HepG2 (cell line): ENCODE measurements at regions of chr9 and their contacts with region 1.

Region 1: DNA sequence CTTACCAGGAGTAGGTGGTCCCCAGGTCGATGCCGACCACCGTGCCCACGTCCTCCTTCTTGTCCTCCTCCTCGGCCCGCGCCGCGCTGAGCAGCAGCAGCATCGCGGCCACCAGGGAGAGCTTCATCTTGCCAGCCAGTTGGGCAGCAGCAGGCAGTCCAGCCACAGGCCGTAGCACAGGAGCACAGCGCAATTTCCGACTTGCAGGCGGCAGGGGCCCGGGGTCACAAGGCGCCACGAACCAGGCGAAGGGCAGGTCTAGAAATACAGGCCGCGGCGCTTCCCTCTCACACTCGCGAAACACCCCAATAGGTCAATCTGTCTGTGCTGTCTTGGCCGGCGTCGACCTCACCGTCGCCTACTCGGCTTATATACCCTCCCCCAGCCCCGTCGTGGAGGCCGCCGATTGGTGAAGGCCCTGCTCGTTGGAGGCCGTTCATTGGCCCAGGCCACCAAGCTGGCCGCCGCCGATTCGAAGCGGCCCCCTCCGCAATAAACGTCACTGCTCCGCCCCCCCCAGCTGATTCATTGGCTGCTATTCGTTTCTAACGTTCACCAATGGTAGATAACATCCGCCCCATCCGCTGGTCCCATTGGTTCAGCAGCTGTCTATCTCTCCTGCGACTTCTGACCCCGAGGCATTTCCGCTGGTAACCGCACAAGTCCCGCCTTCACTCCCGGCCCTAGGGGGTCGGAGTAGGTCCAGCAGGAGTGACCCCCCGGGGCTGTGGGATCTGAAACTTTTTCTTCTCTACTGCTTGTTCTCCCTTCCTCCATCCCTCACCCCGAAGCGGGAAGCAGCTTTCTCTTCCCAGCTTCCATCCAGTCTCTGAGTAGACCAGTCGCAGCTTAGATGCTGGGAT is at the start of gene HSPA5:
- DNase-seq: peak; percentile 99
- ATAC-seq: peak; percentile 95
- H3K4me3 ChIP-seq: peak within 1 kb of the TSS; percentile 89 to 98 (median 97)
- H3K27ac ChIP-seq: peak within 1 kb of the TSS; percentile 97
- H3K4me1 ChIP-seq: peaks cover 55% of the 10 kb centered on the region
- H3K27me3 ChIP-seq: no peaks in the 10 kb centered on the region; a peak in 1 of 5 replicates
- CTCF ChIP-seq: peak; percentile 45
- EP300 ChIP-seq: peak in 1 of 2 experiments; percentile 5; a peak in 2 of 4 replicates
- POLR2A ChIP-seq: peak; percentile 98 to 99
- RAD21 ChIP-seq: no peak
- total RNA-seq, gene HSPA5: 170 and 201 TPM in 2 replicates

Region 2: GRCh38 chr9:123312306-123312877 is 1928.8 kb before region 1 on chr9:
- CTCF ChIA-PET with region 1: no interaction called
- POLR2A ChIA-PET with region 1: no interaction called
- in situ Hi-C with region 1: no loop called
- intact Hi-C with region 1: no loop called
- DNase-seq: no peak
- ATAC-seq: peak; percentile 24; the same call in 1 of the 3 replicates
- H3K4me3 ChIP-seq: no peak overlapping the region
- H3K27ac ChIP-seq: no peak overlapping the region
- H3K4me1 ChIP-seq: peaks cover 66% of the 10 kb centered on the region
- H3K27me3 ChIP-seq: no peaks in the 10 kb centered on the region
- CTCF ChIP-seq: no peak
- EP300 ChIP-seq: no peak
- POLR2A ChIP-seq: no peak
- RAD21 ChIP-seq: no peak

Region 3: DNA sequence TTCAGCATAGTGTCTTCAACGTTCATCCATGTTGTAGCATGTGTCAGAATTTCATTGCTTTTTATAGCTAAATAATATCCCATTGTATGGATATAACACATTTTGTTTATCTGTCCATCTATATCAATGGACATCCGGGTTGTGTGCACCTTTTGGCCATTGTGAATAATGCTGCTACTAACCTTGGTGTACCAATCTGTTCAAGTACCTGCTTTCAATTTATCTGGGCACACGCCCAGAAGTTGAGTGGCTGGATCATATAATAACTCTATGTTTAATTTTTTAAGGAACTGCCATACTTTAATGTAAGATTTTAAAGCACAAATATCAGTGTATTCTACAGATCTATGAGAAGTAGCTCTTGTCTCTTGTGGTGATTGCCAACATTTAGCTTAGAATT is 141.4 kb before region 1 on chr9:
- CTCF ChIA-PET with region 1: no interaction called
- POLR2A ChIA-PET with region 1: no interaction called
- in situ Hi-C with region 1: no loop called
- intact Hi-C with region 1: no loop called
- DNase-seq: no peak
- ATAC-seq: no peak
- H3K4me3 ChIP-seq: no peak overlapping the region
- H3K27ac ChIP-seq: no peak overlapping the region
- H3K4me1 ChIP-seq: peaks cover 19% of the 10 kb centered on the region
- H3K27me3 ChIP-seq: no peaks in the 10 kb centered on the region
- CTCF ChIP-seq: no peak
- EP300 ChIP-seq: no peak
- POLR2A ChIP-seq: no peak
- RAD21 ChIP-seq: no peak

Region 4: GRCh38 chr9:125189361-125190289 is 51.6 kb before region 1 on chr9 and contains the start of gene PPP6C:
- CTCF ChIA-PET with region 1: no interaction called
- POLR2A ChIA-PET with region 1: interaction called, 11 read pairs
- in situ Hi-C with region 1: no loop called
- intact Hi-C with region 1: no loop called
- DNase-seq: peak; percentile 91
- ATAC-seq: peak; percentile 97
- H3K4me3 ChIP-seq: peak within 1 kb of the TSS; percentile 91 to 100 (median 98)
- H3K27ac ChIP-seq: peak within 1 kb of the TSS; percentile 90
- H3K4me1 ChIP-seq: peaks cover 50% of the 10 kb centered on the region
- H3K27me3 ChIP-seq: no peaks in the 10 kb centered on the region; a peak in 1 of 5 replicates
- CTCF ChIP-seq: peak; percentile 93
- EP300 ChIP-seq: no peak
- POLR2A ChIP-seq: peak; percentile 50 to 62
- RAD21 ChIP-seq: peak; percentile 31; the same call in 1 of the 2 replicates
- total RNA-seq, gene PPP6C: 20.9 and 32.7 TPM in 2 replicates

Region 5: DNA sequence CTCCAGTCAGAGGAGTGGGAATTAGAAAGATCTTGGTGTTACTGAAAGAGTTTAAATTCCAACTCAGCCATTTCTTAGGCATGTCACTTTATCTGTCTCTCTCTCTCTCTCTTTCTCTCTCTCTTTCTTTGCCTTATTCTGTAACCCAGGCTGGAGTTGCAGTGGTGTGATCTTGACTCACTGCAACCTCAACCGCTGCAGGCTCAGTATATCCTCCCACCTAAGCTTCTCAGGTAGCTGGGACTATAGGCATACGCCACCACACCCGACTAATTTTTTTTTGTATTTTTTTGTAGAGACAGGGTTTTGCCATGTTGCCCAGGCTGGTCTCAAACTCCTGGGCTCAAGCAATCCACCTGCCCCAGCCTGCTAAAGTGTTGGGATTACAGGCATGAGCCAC is 22.6 kb before region 1 on chr9:
- CTCF ChIA-PET with region 1: no interaction called
- POLR2A ChIA-PET with region 1: interaction called, 13 read pairs
- in situ Hi-C with region 1: no loop called
- intact Hi-C with region 1: no loop called
- DNase-seq: no peak
- ATAC-seq: no peak
- H3K4me3 ChIP-seq: no peak overlapping the region
- H3K27ac ChIP-seq: no peak overlapping the region
- H3K4me1 ChIP-seq: no peaks in the 10 kb centered on the region
- H3K27me3 ChIP-seq: no peaks in the 10 kb centered on the region
- CTCF ChIP-seq: no peak
- EP300 ChIP-seq: no peak
- POLR2A ChIP-seq: no peak
- RAD21 ChIP-seq: no peak

Region 6: DNA sequence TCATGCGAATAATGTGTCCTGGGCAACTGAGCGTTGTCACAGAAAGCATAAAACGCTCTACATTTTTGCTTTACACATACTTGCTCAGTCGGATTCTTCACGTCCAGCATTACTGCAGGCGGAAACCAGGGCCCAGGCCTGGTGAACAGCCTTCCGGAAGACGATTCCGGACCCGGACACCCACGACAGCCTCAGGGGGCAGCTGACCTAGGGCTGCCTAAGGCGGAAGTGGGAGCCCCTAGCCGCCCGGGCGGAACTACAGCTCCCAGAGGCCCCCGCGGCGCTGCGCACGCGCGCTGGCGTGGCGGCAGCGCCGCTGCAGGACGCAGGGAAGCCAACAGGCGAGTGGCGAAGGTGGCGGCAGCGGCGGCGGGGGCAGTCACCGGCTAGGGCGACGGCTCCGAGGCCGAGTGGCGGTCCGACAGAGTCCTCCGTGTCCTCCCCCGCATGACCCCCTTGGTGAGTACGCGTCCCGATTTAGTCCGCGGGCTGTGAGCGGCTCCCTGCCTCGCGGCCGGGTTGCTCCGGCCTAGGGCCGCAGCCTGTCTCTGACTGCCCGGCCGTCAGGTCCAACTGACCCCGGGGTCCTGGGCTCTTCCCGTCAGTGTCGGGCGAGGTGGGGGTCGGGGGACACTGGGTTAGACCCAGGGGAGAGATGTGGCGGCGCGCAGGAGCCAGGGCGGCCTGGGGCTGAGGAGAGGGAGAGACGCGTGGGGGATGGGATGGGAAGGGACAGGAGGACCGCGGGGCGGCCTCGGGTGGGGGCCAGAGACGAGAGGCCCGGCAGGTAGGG is 20.5 kb after region 1 on chr9 and contains the start of gene GAPVD1:
- CTCF ChIA-PET with region 1: no interaction called
- POLR2A ChIA-PET with region 1: interaction called, 73 read pairs
- in situ Hi-C with region 1: no loop called
- intact Hi-C with region 1: loop called (anchors 1 kb)
- DNase-seq: peak; percentile 93
- ATAC-seq: peak; percentile 98
- H3K4me3 ChIP-seq: peak within 1 kb of the TSS; percentile 83 to 99 (median 87)
- H3K27ac ChIP-seq: peak within 1 kb of the TSS; percentile 94
- H3K4me1 ChIP-seq: peaks cover 54% of the 10 kb centered on the region
- H3K27me3 ChIP-seq: no peaks in the 10 kb centered on the region
- CTCF ChIP-seq: peak; percentile 56
- EP300 ChIP-seq: no peak
- POLR2A ChIP-seq: peak; percentile 85 to 92
- RAD21 ChIP-seq: peak; percentile 46; the same call in 1 of the 2 replicates
- total RNA-seq, gene GAPVD1: 33.2 and 47.0 TPM in 2 replicates

Region 7: GRCh38 chr9:125296833-125297372 is 55.7 kb after region 1 on chr9:
- CTCF ChIA-PET with region 1: no interaction called
- POLR2A ChIA-PET with region 1: interaction called, 13 read pairs
- in situ Hi-C with region 1: no loop called
- intact Hi-C with region 1: loop called (anchors 2 kb)
- DNase-seq: peak; percentile 95
- ATAC-seq: peak; percentile 98
- H3K4me3 ChIP-seq: peak overlapping the region in 1 of 3 experiments; percentile 7; a peak in 1 of 6 replicates
- H3K27ac ChIP-seq: peak overlapping the region; percentile 57
- H3K4me1 ChIP-seq: peaks cover 33% of the 10 kb centered on the region
- H3K27me3 ChIP-seq: no peaks in the 10 kb centered on the region
- CTCF ChIP-seq: no peak
- EP300 ChIP-seq: peak; percentile 85
- POLR2A ChIP-seq: no peak
- RAD21 ChIP-seq: no peak